Transverse colon (tissue), 4 donors: ENCODE measurements at regions of chr17 and their contacts with region 1.

Region 1: DNA sequence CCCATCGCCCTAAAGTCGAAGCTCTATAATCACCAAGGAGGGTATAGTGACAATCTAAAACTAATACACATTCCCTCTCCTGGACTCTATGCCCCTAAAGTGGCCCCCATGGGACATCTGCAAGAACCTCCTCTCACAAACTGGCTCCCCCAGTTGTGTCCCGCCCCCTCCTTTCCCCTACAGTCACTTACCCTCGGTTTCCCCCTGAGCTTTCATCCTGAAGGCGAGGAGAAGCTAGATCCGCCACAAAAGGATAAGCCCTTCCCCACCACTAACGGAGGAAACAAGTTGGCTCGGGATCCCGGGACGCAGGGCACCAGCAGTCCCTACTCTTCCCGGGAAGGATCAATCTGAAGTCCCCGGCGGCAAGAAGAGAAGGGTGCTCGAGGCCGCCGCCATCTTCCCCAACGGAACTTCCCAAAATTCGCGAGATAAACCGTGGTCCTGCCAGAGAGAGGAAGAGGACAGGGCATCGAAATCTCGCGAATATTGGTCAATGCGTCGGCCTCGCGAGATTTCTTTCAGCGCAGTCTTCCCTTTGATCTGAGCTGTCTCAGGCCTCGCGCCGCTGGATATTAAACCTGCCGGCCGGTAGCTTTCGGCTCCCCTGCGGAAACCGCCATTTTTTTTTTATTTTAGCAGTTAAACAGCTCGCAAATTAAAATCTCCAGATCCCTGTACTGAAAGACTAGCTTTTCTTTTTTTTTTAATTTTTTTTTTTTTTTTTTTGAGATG is at the start of gene MED1:
- DNase-seq: peak; percentile 95
- H3K4me3 ChIP-seq: peak within 1 kb of the TSS; percentile 35 to 97 (median 70)
- H3K27ac ChIP-seq: peak within 1 kb of the TSS; percentile 75 to 91 (median 84)
- H3K4me1 ChIP-seq: peaks cover 5 to 23% (median 9%) of the 10 kb centered on the region in 4 donors
- H3K27me3 ChIP-seq: no peaks in the 10 kb centered on the region
- CTCF ChIP-seq: no peak
- EP300 ChIP-seq: no peak
- POLR2A ChIP-seq: peak; percentile 54
- total RNA-seq, gene MED1: 4.8 to 20.9 (median 18.7) TPM

Region 2: GRCh38 chr17:38428112-38428642 is 1022.8 kb before region 1 on chr17 and contains the start of gene ARHGAP23:
- in situ Hi-C with region 1: no loop called
- intact Hi-C with region 1: no loop called
- DNase-seq: peak; percentile 62
- H3K4me3 ChIP-seq: peak within 1 kb of the TSS; percentile 62 to 84 (median 76)
- H3K27ac ChIP-seq: peak within 1 kb of the TSS; percentile 84 to 96 (median 90)
- H3K4me1 ChIP-seq: peaks cover 9 to 28% (median 20%) of the 10 kb centered on the region in 4 donors
- H3K27me3 ChIP-seq: peaks cover 8% of the 10 kb centered on the region
- CTCF ChIP-seq: no peak
- EP300 ChIP-seq: no peak
- POLR2A ChIP-seq: peak; percentile 13
- total RNA-seq, gene ARHGAP23: 4.5 to 21.7 (median 17.0) TPM

Region 3: GRCh38 chr17:39401412-39402243 is 49.4 kb before region 1 on chr17 and contains the start of gene FBXL20:
- in situ Hi-C with region 1: loop called in 1 of 4 experiments (anchors 10 kb)
- intact Hi-C with region 1: no loop called
- DNase-seq: peak; percentile 95
- H3K4me3 ChIP-seq: peak within 1 kb of the TSS; percentile 66 to 99 (median 92)
- H3K27ac ChIP-seq: peak within 1 kb of the TSS; percentile 88 to 99 (median 94)
- H3K4me1 ChIP-seq: peaks cover 7 to 51% (median 19%) of the 10 kb centered on the region in 4 donors
- H3K27me3 ChIP-seq: no peaks in the 10 kb centered on the region
- CTCF ChIP-seq: no peak
- EP300 ChIP-seq: no peak
- POLR2A ChIP-seq: peak; percentile 87
- total RNA-seq, gene FBXL20: 13.8 to 49.4 (median 23.1) TPM

Region 4: DNA sequence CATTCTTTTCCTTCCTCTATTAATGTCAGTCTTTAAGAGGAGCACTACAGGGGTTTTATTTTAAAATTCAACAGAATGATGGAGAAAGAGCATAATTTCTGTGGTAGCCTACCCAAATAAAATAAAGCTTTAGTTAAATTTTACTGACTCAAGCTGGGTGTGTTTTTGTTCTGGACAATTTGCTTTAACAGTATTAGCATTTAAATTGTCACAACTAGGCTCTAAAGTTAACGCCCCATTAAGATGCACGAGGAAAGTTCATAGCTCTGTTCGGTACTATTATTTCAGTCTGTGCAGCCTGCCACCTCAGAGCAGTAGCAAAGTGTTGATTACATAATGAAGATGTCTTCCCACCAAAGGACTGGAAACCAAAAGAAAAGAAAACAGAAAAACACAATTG is 62.3 kb after region 1 on chr17:
- in situ Hi-C with region 1: no loop called
- intact Hi-C with region 1: no loop called
- DNase-seq: no peak
- H3K4me3 ChIP-seq: no peak overlapping the region
- H3K27ac ChIP-seq: no peak overlapping the region
- H3K4me1 ChIP-seq: no peaks in the 10 kb centered on the region
- H3K27me3 ChIP-seq: no peaks in the 10 kb centered on the region
- CTCF ChIP-seq: no peak
- EP300 ChIP-seq: no peak
- POLR2A ChIP-seq: no peak